ENCODE measurements at regions of chr14 and their contacts with region 1.

Region 1: DNA sequence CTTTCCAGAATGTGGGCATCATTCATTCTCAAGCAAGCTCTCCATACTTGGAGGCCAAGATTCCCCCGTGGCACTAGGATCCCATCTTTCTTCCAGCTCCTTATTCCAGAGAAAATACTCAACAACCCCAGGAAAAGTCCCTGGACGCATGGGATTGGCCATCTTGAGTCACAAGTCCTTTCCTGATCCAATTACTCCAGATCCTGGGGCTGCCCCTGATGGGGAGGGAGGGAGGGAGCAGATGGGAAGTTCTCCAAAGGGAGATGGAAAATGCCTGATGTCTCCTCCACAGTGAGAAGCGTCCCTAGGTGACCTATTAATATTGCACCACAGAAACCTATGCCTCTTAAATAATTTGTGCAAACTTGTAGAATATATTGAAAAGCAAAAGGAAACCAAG is 12.4 kb upstream of the KCNK13 start:
- DNase-seq: no peak
- H3K4me3 ChIP-seq: no peak overlapping the region
- H3K27ac ChIP-seq: no peak overlapping the region
- H3K4me1 ChIP-seq: no peaks in the 10 kb centered on the region
- H3K27me3 ChIP-seq: no peaks in the 10 kb centered on the region
- CTCF ChIP-seq: no peak
- POLR2A ChIP-seq: no peak

Region 2: DNA sequence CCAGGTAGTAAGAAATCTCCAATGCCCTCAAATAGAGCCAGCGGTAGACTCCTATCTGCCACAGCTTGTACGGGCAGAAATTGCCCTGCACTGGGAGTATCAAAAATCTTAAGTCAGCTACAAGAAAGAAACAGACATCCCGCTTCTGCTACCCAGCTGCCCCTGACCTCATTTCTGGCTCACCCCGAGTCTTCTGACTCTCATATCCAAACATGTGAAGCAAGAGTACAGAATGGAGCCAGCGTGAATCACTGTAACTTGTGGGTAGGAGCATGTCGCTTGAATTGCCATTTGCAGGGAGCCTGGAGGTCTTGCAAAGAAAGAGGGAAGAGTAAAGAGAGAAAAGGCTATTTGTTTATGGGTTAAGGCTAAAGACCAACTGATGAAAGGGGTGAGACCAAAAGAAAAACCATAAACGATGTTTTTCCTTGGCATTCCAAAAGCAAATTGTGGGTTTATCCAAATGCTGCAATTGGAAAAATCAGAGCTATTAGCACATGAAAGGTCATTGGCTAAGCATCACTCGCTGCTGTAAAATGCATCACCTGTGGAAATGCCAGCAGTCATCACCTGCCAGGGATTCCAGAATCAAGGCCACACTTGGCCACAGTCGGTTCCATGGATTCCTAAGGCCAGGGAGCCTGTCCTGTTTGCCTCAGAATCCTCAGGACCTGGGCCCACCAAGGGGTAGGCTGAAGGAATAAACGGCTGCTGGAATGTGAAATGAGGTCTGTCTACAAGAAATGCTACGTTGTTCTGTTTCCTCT is 719.0 kb before region 1 on chr14:
- intact Hi-C with region 1: no loop called
- DNase-seq: peak in 1 of 2 donors; percentile 91
- H3K4me3 ChIP-seq: no peak overlapping the region
- H3K27ac ChIP-seq: peak overlapping the region; percentile 72
- H3K4me1 ChIP-seq: peaks cover 17% of the 10 kb centered on the region
- H3K27me3 ChIP-seq: no peaks in the 10 kb centered on the region
- CTCF ChIP-seq: no peak
- POLR2A ChIP-seq: no peak

Region 3: DNA sequence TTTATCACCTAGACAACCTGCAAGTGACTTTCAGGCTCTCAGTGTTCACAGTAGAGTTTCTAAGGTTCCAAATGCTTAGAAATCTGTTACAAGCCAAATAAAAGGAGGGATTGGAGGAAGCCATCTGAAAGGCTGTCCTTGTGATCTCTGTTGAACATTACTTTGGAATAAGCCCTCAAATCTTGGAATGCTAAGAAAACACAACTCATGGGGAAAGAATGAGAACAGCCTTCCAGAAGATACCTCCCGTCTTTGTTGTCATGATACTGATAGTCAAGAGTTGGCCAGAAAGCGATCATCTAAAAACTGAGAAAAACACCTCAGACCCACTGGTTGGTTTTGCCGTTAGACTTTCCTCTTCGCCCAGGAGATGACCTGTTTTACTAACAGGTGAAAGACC is 32.0 kb before region 1 on chr14:
- intact Hi-C with region 1: loop called (anchors 1 kb)
- DNase-seq: no peak
- H3K4me3 ChIP-seq: no peak overlapping the region
- H3K27ac ChIP-seq: no peak overlapping the region
- H3K4me1 ChIP-seq: no peaks in the 10 kb centered on the region
- H3K27me3 ChIP-seq: no peaks in the 10 kb centered on the region
- CTCF ChIP-seq: no peak
- POLR2A ChIP-seq: no peak

Measured in vagina (tissue), 2 donors.